Mammary epithelial cell (primary cell): ENCODE measurements at regions of chr9 and their contacts with region 1.

Region 1: GRCh38 chr9:121156263-121156731 is 45.4 kb downstream of the RAB14 start:
- DNase-seq: peak; percentile 97
- H3K4me3 ChIP-seq: no peak overlapping the region
- H3K27ac ChIP-seq: peak overlapping the region; percentile 41
- H3K4me1 ChIP-seq: peaks cover 39% of the 10 kb centered on the region
- H3K27me3 ChIP-seq: no peaks in the 10 kb centered on the region
- CTCF ChIP-seq: no peak

Region 2: DNA sequence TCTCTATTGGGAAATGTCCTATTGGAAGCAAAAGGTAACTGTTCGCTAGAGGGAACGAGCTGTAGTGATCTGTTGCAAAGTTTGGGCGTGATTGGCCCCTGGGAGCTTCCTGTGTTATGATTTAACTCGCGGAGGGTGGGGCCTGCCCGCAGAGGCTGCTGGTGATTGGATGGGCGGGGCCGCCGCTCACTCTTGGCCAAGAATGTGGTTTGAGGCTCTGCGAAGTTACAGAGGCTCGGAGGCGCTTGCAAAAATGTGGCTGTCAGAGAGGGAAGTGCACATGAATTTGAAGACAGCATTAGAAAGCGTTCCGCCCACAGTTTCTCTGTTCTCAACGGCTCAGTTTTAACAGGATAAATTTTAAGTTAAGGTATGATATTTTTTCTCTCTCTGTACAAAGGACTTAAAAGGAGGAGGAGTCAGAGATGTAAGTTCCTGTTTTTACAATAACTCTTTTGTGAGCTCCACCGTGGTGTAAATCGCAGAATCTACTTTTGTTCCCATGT is 34.7 kb before region 1 on chr9:
- CTCF ChIA-PET with region 1: interaction called, 3 read pairs
- dilution Hi-C with region 1: no loop called
- in situ Hi-C with region 1: no loop called
- intact Hi-C with region 1: loop called (anchors 1 kb)
- DNase-seq: peak; percentile 96
- H3K4me3 ChIP-seq: peak overlapping the region; percentile 49 to 88 (median 58)
- H3K27ac ChIP-seq: peak overlapping the region; percentile 71
- H3K4me1 ChIP-seq: peaks cover 11% of the 10 kb centered on the region
- H3K27me3 ChIP-seq: no peaks in the 10 kb centered on the region
- CTCF ChIP-seq: peak in 1 of 2 donors; percentile 37

Region 3: GRCh38 chr9:121138973-121139372 is 17.3 kb before region 1 on chr9:
- CTCF ChIA-PET with region 1: interaction called, 5 read pairs
- dilution Hi-C with region 1: no loop called
- in situ Hi-C with region 1: no loop called
- intact Hi-C with region 1: loop called (anchors 1 kb)
- DNase-seq: no peak
- H3K4me3 ChIP-seq: no peak overlapping the region
- H3K27ac ChIP-seq: peak overlapping the region; percentile 57
- H3K4me1 ChIP-seq: peaks cover 24% of the 10 kb centered on the region
- H3K27me3 ChIP-seq: no peaks in the 10 kb centered on the region
- CTCF ChIP-seq: no peak

Region 4: GRCh38 chr9:121196389-121196788 is 40.1 kb after region 1 on chr9:
- CTCF ChIA-PET with region 1: no interaction called
- dilution Hi-C with region 1: no loop called
- in situ Hi-C with region 1: no loop called
- intact Hi-C with region 1: loop called (anchors 2 kb)
- DNase-seq: peak; percentile 20
- H3K4me3 ChIP-seq: peak overlapping the region in 1 of 3 experiments; percentile 49
- H3K27ac ChIP-seq: peak overlapping the region; percentile 94
- H3K4me1 ChIP-seq: peaks cover 46% of the 10 kb centered on the region
- H3K27me3 ChIP-seq: no peaks in the 10 kb centered on the region
- CTCF ChIP-seq: no peak